ENCODE measurements at regions of chr11 and their contacts with region 1.

Region 1: DNA sequence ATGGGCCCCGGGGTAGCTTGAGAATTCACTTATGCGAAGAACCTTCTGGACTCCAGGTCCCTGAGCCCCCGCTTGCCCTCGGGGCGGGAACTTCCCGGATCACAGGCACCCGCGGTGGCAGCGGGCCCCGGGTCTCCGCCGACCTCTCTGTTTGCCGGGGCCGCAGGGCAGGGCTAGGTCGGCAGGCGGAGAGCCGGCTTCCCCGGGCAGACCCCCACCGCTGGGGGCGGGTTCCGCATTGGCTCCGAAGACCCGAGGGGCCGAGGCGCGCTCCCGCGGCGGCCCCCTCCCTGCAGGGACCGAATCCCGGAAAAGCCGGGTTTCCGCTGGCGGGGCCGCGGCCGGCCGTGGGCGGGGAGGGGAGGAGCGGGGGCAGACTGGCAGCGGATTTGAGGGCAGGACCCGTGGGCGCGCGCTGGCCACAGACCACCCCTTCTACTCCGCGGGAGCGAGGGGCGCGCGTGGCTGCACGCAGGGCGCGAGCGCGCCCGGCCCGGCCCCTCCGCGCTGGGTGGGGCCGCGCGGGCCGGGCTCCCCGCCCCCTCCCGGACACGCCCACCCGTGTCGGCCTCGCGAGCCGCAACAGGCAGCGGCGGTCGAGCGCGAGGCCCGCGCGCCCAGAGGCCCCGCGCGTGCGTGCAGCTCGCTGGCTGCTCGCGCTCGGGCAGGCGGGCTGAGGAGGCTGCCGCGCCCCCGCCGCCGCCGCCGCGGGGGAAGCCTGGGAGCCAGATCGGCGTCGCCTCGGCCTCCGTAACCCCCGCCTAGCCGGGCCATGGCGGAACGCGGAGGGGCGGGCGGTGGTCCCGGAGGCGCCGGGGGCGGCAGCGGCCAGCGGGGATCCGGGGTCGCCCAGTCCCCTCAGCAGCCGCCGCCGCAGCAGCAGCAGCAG is at the start of gene PACS1:
- DNase-seq: peak; percentile 70 to 74
- ATAC-seq: peak; percentile 63 to 65
- H3K4me3 ChIP-seq: peak within 1 kb of the TSS; percentile 87
- H3K27ac ChIP-seq: peak within 1 kb of the TSS; percentile 95 to 98
- H3K4me1 ChIP-seq: peaks cover 32% of the 10 kb centered on the region
- CTCF ChIP-seq: no peak; the same call in 2 of the 3 replicates
- EP300 ChIP-seq: no peak
- POLR2A ChIP-seq: peak; percentile 82
- RAD21 ChIP-seq: no peak
- polyA plus RNA-seq, gene PACS1: 48.2 and 71.7 TPM in 2 replicates

Region 2: GRCh38 chr11:65961902-65962564 is 107.9 kb before region 1 on chr11:
- CTCF ChIA-PET with region 1: no interaction called
- POLR2A ChIA-PET with region 1: no interaction called
- DNase-seq: peak in 1 of 2 experiments; percentile 43
- ATAC-seq: peak; percentile 33 to 51; a peak in 5 of 6 replicates
- H3K4me3 ChIP-seq: peak overlapping the region; percentile 95
- H3K27ac ChIP-seq: peak overlapping the region; percentile 82 to 99
- H3K4me1 ChIP-seq: peaks cover 12% of the 10 kb centered on the region; the same call in 2 of the 3 replicates
- CTCF ChIP-seq: no peak
- EP300 ChIP-seq: no peak
- POLR2A ChIP-seq: no peak
- RAD21 ChIP-seq: no peak

Region 3: GRCh38 chr11:66022401-66023185 is 47.4 kb before region 1 on chr11:
- CTCF ChIA-PET with region 1: interaction called, 20 read pairs
- POLR2A ChIA-PET with region 1: no interaction called
- DNase-seq: peak; percentile 72 to 82
- ATAC-seq: peak; percentile 78 to 92
- H3K4me3 ChIP-seq: peak overlapping the region; percentile 33
- H3K27ac ChIP-seq: peak overlapping the region; percentile 50 to 77
- H3K4me1 ChIP-seq: peaks cover 12% of the 10 kb centered on the region
- CTCF ChIP-seq: peak; percentile 84
- EP300 ChIP-seq: no peak
- POLR2A ChIP-seq: no peak
- RAD21 ChIP-seq: peak; percentile 72 to 75

Region 4: DNA sequence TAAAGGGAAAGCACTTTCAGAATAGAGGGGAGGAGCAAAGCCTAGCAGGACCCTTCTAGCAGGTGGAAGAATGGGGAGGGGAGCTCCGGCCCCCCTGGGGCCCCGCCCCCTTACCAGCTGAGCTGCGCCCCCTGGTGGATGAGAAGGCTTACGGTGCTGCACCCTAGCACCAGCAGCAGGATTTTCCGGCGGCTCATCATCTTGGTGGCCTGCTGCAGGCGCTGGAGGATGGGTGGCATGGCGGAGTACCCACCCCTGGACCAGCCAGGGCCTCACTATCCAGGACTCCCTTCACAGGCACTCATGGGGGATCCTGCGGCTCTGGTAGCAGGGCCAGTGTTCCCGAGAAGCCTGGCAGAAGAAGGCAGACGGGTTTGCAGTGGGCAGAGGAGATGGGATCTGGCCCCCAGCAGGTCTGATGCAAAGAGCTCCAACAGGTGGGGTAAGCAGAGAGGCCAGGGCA is 24.8 kb before region 1 on chr11:
- CTCF ChIA-PET with region 1: interaction called, 233 read pairs
- POLR2A ChIA-PET with region 1: interaction called, 3 read pairs
- DNase-seq: peak; percentile 87 to 95
- ATAC-seq: peak; percentile 86 to 96
- H3K4me3 ChIP-seq: no peak overlapping the region
- H3K27ac ChIP-seq: peak overlapping the region; percentile 46 to 75; a peak in 3 of 6 replicates
- H3K4me1 ChIP-seq: peaks cover 9% of the 10 kb centered on the region; the same call in 1 of the 3 replicates
- CTCF ChIP-seq: peak; percentile 88
- EP300 ChIP-seq: no peak
- POLR2A ChIP-seq: no peak
- RAD21 ChIP-seq: peak; percentile 48 to 52

Region 5: GRCh38 chr11:66081505-66081904 is 11.5 kb after region 1 on chr11:
- CTCF ChIA-PET with region 1: interaction called, 82 read pairs
- POLR2A ChIA-PET with region 1: no interaction called
- DNase-seq: no peak
- ATAC-seq: peak in 1 of 2 experiments; percentile 18; a peak in 2 of 6 replicates
- H3K4me3 ChIP-seq: no peak overlapping the region
- H3K27ac ChIP-seq: peak overlapping the region; percentile 58 to 82
- H3K4me1 ChIP-seq: peaks cover 84% of the 10 kb centered on the region
- CTCF ChIP-seq: no peak
- EP300 ChIP-seq: no peak
- POLR2A ChIP-seq: no peak
- RAD21 ChIP-seq: no peak

Region 6: GRCh38 chr11:66112601-66113098 is 42.7 kb after region 1 on chr11:
- CTCF ChIA-PET with region 1: interaction called, 37 read pairs
- POLR2A ChIA-PET with region 1: interaction called, 4 read pairs
- DNase-seq: peak in 1 of 2 experiments; percentile 70
- ATAC-seq: peak; percentile 68 to 73
- H3K4me3 ChIP-seq: peak overlapping the region; percentile 9; the same call in 1 of the 3 replicates
- H3K27ac ChIP-seq: peak overlapping the region; percentile 93
- H3K4me1 ChIP-seq: peaks cover 95% of the 10 kb centered on the region
- CTCF ChIP-seq: no peak
- EP300 ChIP-seq: peak; percentile 26 to 60; a peak in 2 of 5 replicates
- POLR2A ChIP-seq: no peak
- RAD21 ChIP-seq: no peak

Region 7: GRCh38 chr11:66136752-66137123 is 66.8 kb after region 1 on chr11:
- CTCF ChIA-PET with region 1: interaction called, 112 read pairs
- POLR2A ChIA-PET with region 1: interaction called, 6 read pairs
- DNase-seq: peak; percentile 58 to 74
- ATAC-seq: peak; percentile 42 to 68; a peak in 5 of 6 replicates
- H3K4me3 ChIP-seq: peak overlapping the region; percentile 10; the same call in 1 of the 3 replicates
- H3K27ac ChIP-seq: peak overlapping the region; percentile 83 to 87
- H3K4me1 ChIP-seq: peaks cover 93% of the 10 kb centered on the region
- CTCF ChIP-seq: no peak
- EP300 ChIP-seq: peak; percentile 27 to 39; a peak in 1 of 5 replicates
- POLR2A ChIP-seq: no peak
- RAD21 ChIP-seq: peak in 1 of 2 experiments; percentile 20; a peak in 1 of 5 replicates

Region 8: DNA sequence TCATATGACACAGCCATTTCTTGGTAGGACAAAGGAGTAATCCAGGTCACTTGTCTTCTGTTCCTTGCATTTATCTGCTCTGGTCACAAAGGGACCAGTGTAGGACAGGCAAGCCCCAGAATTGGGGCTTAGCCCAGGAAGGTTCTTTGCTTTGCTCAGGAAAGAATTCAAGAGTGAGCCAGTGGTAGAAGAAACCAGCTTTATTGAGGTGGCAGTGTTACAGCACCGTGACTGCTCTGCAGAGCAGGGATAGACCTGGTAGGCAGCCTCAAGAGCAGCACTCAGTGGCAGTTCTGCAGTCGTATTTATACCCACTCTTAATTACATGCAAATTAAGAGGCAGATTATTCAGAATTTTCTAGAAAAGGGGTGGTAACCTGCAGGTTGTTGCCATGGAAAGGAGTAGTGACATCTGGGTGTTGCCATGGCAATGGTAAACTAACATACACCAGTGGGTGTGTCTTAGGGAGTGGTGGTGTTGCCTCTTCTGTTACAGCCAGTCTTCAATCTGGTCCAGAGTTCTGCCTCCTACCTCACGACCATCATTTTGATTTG is 113.6 kb after region 1 on chr11:
- CTCF ChIA-PET with region 1: interaction called, 12 read pairs
- POLR2A ChIA-PET with region 1: no interaction called
- DNase-seq: peak in 1 of 2 experiments; percentile 62
- ATAC-seq: peak; percentile 76 to 79; a peak in 5 of 6 replicates
- H3K4me3 ChIP-seq: no peak overlapping the region
- H3K27ac ChIP-seq: peak overlapping the region in 1 of 2 experiments; percentile 9; a peak in 1 of 6 replicates
- H3K4me1 ChIP-seq: peaks cover 30% of the 10 kb centered on the region
- CTCF ChIP-seq: no peak
- EP300 ChIP-seq: no peak
- POLR2A ChIP-seq: no peak
- RAD21 ChIP-seq: no peak